ENCODE measurements at regions of chr7 and their contacts with region 1.

Region 1: GRCh38 chr7:17130281-17131059 is 168.0 kb upstream of the AHR start:
- DNase-seq: no peak
- ATAC-seq: no peak
- H3K4me3 Mint-ChIP-seq: no peak overlapping the region
- H3K27ac Mint-ChIP-seq: no peak overlapping the region
- H3K4me1 Mint-ChIP-seq: peaks cover 41% of the 10 kb centered on the region
- H3K27me3 Mint-ChIP-seq: peaks cover 1% of the 10 kb centered on the region

Region 2: DNA sequence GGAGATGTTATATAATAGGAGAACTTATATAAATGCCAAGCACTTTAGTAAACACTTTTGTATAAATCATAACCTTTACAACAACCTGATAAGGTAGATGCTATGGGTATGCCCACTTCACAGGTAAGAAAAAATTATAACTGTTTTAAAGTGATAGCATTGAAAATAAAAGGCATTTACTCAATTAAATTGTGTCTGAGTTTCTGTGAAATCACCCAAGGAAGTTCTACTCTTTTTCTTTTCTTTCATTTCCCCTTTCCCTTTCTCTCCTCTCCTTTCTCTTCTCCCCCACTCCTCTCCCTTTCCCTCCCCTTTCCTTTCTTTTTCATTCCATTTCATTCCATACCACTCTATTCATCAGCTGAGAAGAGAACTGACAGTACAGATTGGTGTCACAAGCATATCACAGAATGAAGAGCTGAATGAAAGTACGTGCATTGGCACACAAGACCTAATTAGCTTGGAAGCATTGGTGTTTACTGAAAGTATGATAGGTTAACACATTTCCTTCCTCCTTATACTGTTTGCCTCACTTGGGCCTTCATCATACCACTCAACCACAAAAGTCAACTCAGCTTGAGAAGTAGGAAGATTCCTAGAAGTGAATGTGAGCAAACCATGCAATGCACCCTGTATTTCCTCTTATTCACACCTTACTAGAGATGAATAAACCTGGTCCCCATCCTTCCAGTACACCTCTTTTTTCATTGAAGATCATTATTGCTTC is 130.8 kb before region 1 on chr7:
- CTCF ChIA-PET with region 1: no interaction called
- POLR2A ChIA-PET with region 1: no interaction called
- intact Hi-C with region 1: loop called in 1 of 2 experiments (anchors 5 kb)
- DNase-seq: peak; percentile 14
- ATAC-seq: peak; percentile 98
- H3K4me3 Mint-ChIP-seq: no peak overlapping the region
- H3K27ac Mint-ChIP-seq: peak overlapping the region; percentile 43
- H3K4me1 Mint-ChIP-seq: peaks cover 5% of the 10 kb centered on the region
- H3K27me3 Mint-ChIP-seq: peaks cover 2% of the 10 kb centered on the region

Region 3: GRCh38 chr7:17021180-17021579 is 109.3 kb before region 1 on chr7:
- CTCF ChIA-PET with region 1: no interaction called
- POLR2A ChIA-PET with region 1: no interaction called
- intact Hi-C with region 1: loop called in 1 of 2 experiments (anchors 5 kb)
- DNase-seq: no peak
- ATAC-seq: no peak
- H3K4me3 Mint-ChIP-seq: no peak overlapping the region
- H3K27ac Mint-ChIP-seq: no peak overlapping the region
- H3K4me1 Mint-ChIP-seq: peaks cover 12% of the 10 kb centered on the region
- H3K27me3 Mint-ChIP-seq: peaks cover 7% of the 10 kb centered on the region

Region 4: GRCh38 chr7:17166824-17167379 is 36.4 kb after region 1 on chr7:
- CTCF ChIA-PET with region 1: no interaction called
- POLR2A ChIA-PET with region 1: no interaction called
- intact Hi-C with region 1: loop called in 1 of 2 experiments (anchors 5 kb)
- DNase-seq: peak; percentile 65
- ATAC-seq: peak; percentile 94
- H3K4me3 Mint-ChIP-seq: no peak overlapping the region
- H3K27ac Mint-ChIP-seq: peak overlapping the region; percentile 20
- H3K4me1 Mint-ChIP-seq: peaks cover 36% of the 10 kb centered on the region
- H3K27me3 Mint-ChIP-seq: no peaks in the 10 kb centered on the region

Region 5: DNA sequence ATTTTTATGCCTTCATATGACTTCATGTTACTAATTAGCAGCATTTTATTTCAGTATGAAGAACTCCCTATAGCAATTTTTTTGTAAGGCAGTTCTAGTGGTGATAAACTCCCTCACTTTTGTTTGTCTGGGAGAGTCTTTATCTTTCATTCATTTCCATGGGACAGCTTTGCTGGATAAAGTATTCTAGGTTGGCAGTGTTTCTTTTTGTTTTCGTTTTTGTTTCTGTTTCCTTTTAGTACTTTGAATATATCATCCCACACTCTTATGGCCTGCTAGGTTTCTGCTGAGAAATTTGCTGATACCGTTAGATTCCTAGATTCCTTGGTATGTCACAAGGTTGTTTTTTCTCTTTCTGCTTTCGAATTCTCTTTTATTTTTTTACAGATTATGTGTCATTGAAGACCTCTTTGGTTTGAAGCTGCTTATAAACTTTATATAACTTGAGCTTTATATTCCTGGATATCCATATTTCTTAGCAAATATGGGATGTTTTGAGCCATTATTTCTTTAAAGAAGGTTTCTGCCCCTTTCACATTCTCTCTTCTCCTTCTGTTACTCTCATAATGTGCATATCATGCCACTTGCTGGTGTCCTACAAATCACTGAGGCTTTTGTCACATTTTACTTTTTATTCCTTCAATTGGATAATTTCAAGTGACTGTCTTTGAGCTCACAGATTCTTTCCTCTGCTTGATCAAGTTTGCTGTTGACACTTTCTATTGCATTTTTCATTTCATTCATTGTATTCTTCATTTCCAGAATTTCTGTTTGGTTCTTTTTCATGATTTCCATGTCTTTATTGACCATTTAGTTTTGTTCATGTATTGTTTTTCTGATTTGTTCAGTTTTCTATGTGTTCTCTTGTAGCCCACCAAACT is 139.1 kb after region 1 on chr7:
- CTCF ChIA-PET with region 1: no interaction called
- POLR2A ChIA-PET with region 1: no interaction called
- intact Hi-C with region 1: no loop called
- DNase-seq: no peak
- ATAC-seq: no peak
- H3K4me3 Mint-ChIP-seq: no peak overlapping the region
- H3K27ac Mint-ChIP-seq: no peak overlapping the region
- H3K4me1 Mint-ChIP-seq: peaks cover 9% of the 10 kb centered on the region
- H3K27me3 Mint-ChIP-seq: no peaks in the 10 kb centered on the region

Region 6: GRCh38 chr7:17523813-17524741 is 393.6 kb after region 1 on chr7:
- CTCF ChIA-PET with region 1: no interaction called
- POLR2A ChIA-PET with region 1: no interaction called
- intact Hi-C with region 1: no loop called
- DNase-seq: no peak
- ATAC-seq: no peak
- H3K4me3 Mint-ChIP-seq: no peak overlapping the region
- H3K27ac Mint-ChIP-seq: no peak overlapping the region
- H3K4me1 Mint-ChIP-seq: peaks cover 2% of the 10 kb centered on the region
- H3K27me3 Mint-ChIP-seq: no peaks in the 10 kb centered on the region

Measured in activated CD4-positive, alpha-beta T cell treated with anti-CD3 and anti-CD28 coated beads for 36 hours (primary cell).